ENCODE measurements at regions of chr12 and their contacts with region 1.

Region 1: GRCh38 chr12:13534645-13535398 is 338.3 kb downstream of the EMP1 start:
- DNase-seq: peak; percentile 65
- H3K4me3 Mint-ChIP-seq: no peak overlapping the region
- H3K27ac Mint-ChIP-seq: no peak overlapping the region
- H3K4me1 Mint-ChIP-seq: no peaks in the 10 kb centered on the region
- H3K27me3 Mint-ChIP-seq: peaks cover 12% of the 10 kb centered on the region

Region 2: GRCh38 chr12:13362260-13362841 is 172.5 kb before region 1 on chr12:
- CTCF ChIA-PET with region 1: interaction called, 5 read pairs
- intact Hi-C with region 1: loop called (anchors 2 kb)
- DNase-seq: peak; percentile 75
- H3K4me3 Mint-ChIP-seq: no peak overlapping the region
- H3K27ac Mint-ChIP-seq: no peak overlapping the region
- H3K4me1 Mint-ChIP-seq: no peaks in the 10 kb centered on the region
- H3K27me3 Mint-ChIP-seq: peaks cover 15% of the 10 kb centered on the region

Region 3: GRCh38 chr12:13661005-13661887 is 126.4 kb after region 1 on chr12:
- CTCF ChIA-PET with region 1: interaction called, 4 read pairs
- intact Hi-C with region 1: loop called (anchors 5 kb)
- DNase-seq: peak; percentile 50
- H3K4me3 Mint-ChIP-seq: no peak overlapping the region
- H3K27ac Mint-ChIP-seq: no peak overlapping the region
- H3K4me1 Mint-ChIP-seq: no peaks in the 10 kb centered on the region
- H3K27me3 Mint-ChIP-seq: peaks cover 8% of the 10 kb centered on the region

Measured in activated naive CD4-positive, alpha-beta T cell treated with anti-CD3 and anti-CD28 coated beads for 36 hours (primary cell).